Transverse colon (tissue), 4 donors: ENCODE measurements at regions of chr5 and their contacts with region 1.

Region 1: DNA sequence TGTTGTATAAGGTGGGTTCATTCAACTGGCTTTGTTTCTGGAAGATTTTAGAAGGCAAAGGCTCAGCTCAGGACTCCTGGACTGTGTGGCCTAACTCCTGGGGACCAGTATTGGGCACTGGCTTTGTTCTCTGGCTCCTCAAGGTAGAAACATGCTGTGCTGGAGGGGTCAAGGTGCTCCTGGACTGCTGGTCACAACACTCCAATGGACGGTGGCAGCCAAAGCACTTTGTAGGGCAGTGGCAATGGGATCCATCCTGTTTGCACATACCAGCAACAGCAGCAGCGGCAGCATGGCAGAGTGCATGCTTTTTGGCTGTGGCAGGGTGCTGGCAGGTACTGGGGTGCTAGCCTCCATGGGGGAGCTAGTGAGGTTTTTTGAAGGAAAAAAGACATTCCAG is 65.3 kb downstream of the SLCO6A1 start:
- DNase-seq: no peak
- H3K4me3 ChIP-seq: no peak overlapping the region
- H3K27ac ChIP-seq: no peak overlapping the region
- H3K4me1 ChIP-seq: no peaks in the 10 kb centered on the region
- H3K27me3 ChIP-seq: no peaks in the 10 kb centered on the region
- CTCF ChIP-seq: no peak
- EP300 ChIP-seq: no peak
- POLR2A ChIP-seq: no peak

Region 2: DNA sequence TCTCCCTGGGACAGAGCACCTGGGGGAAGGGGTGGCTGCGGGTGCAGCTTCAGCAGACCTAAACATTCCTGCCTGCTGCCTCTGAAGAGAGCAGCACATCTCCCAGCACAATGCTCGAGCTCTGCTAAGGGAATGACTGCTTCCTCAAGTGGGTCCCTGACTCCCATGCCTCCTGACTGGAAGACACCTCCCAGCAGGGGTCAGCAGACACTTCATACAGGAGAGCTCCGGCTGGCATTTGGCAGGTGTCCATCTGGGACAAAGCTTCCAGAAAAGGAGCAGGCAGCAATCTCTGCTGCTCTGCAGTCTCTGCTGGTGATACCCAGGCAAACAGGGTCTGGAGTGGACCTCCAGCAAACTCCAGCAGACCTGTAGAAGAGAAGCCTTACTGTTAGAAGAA is 11.8 kb before region 1 on chr5:
- in situ Hi-C with region 1: no loop called
- intact Hi-C with region 1: loop called (anchors 1 kb)
- DNase-seq: no peak
- H3K4me3 ChIP-seq: no peak overlapping the region
- H3K27ac ChIP-seq: no peak overlapping the region
- H3K4me1 ChIP-seq: no peaks in the 10 kb centered on the region
- H3K27me3 ChIP-seq: no peaks in the 10 kb centered on the region
- CTCF ChIP-seq: no peak
- EP300 ChIP-seq: no peak
- POLR2A ChIP-seq: no peak